ENCODE measurements at regions of chr1 and their contacts with region 1.

Region 1: DNA sequence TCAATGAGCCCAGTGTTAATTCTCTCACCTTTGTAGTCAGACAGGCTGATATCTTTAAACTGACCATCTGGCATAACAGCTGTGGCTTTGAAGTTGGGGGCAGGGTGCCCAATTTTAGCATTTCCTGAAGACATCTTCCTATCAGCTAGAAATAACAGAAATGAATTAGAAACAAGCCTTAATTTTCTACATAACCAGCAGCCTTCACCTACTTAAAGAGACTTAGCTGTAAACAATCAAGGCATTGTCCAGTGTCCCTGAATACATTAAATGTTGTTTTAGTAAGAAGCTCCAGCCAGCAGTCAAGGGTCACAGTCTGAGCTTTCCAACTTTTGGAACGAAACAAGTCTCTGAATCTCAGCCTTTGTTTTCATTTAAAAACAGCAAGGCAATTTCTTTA is 2.8 kb downstream of the PRDX1 start:
- DNase-seq: no peak
- ATAC-seq: no peak
- H3K4me3 ChIP-seq: no peak overlapping the region
- H3K27ac ChIP-seq: peak overlapping the region in 2 of 4 donors; percentile 12 to 39
- H3K4me1 ChIP-seq: peaks cover 0 to 13% (median 0%) of the 10 kb centered on the region in 3 donors
- H3K27me3 ChIP-seq: no peaks in the 10 kb centered on the region
- CTCF ChIP-seq: no peak

Region 2: GRCh38 chr1:44970317-44970716 is 548.6 kb before region 1 on chr1:
- intact Hi-C with region 1: no loop called
- DNase-seq: no peak
- ATAC-seq: no peak
- H3K4me3 ChIP-seq: no peak overlapping the region
- H3K27ac ChIP-seq: no peak overlapping the region
- H3K4me1 ChIP-seq: no peaks in the 10 kb centered on the region
- H3K27me3 ChIP-seq: no peaks in the 10 kb centered on the region
- CTCF ChIP-seq: no peak

Region 3: GRCh38 chr1:45348716-45349677 is 169.9 kb before region 1 on chr1:
- intact Hi-C with region 1: no loop called
- DNase-seq: peak in 2 of 6 donors; percentile 33 to 51
- ATAC-seq: peak; percentile 63 to 83 (median 80)
- H3K4me3 ChIP-seq: no peak overlapping the region
- H3K27ac ChIP-seq: no peak overlapping the region
- H3K4me1 ChIP-seq: peaks cover 0 to 6% (median 0%) of the 10 kb centered on the region in 3 donors
- H3K27me3 ChIP-seq: no peaks in the 10 kb centered on the region
- CTCF ChIP-seq: no peak

Region 4: DNA sequence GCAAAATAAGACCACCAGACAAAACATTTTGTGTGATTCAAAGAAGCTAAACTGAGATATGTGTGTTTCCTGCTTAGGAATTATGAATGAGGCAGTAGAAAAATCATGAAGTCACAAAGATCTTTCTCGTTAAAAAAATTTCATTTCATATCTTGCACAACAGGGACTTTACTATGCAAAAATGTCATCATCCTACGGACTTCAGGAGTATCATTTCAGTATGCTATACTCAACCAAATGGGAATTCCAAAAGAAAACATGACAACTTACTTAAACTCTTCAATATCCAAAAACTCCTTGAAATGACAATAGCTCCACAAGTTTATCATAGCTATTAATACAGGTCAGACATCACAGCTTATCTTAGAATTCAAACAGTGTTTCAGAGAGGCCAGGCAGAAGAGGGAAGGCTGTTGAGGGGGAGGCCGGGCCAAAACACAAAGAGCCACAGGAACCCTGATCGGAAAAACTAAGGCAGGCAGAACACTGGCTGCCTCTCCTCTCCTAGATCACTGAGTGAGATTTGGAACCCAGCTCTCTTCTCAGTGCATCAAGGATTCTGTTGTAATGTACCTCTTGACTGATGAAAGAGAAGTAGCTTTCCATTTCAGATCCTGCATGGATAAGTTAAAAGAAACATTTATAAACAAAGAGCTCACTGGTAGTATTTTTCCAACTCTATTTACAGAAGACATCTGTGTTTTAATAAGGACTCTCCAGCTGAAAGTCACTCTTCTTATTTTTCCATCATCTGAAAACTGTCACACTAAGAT is 94.8 kb before region 1 on chr1:
- intact Hi-C with region 1: no loop called
- DNase-seq: no peak
- ATAC-seq: no peak
- H3K4me3 ChIP-seq: no peak overlapping the region
- H3K27ac ChIP-seq: no peak overlapping the region
- H3K4me1 ChIP-seq: no peaks in the 10 kb centered on the region
- H3K27me3 ChIP-seq: no peaks in the 10 kb centered on the region
- CTCF ChIP-seq: no peak

Region 5: DNA sequence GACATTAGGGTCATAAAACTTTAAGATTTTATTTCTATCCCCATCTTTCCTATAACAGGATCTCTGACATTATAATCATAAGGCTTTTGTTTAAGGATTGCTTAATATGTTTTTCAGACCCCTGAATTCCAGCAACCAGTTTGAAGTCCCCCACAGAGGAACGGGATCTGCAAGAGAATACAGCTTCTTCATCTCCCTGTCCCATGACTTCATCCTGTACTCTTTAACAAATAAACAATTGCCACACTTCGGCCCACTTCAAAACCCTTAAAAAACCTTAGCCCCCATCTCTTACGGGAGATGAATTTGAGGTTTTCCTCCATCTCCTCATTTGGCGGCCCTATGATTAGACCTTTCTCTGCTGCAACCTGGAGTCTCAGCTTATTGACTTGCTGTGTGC is 63.7 kb before region 1 on chr1:
- intact Hi-C with region 1: no loop called
- DNase-seq: no peak
- ATAC-seq: no peak
- H3K4me3 ChIP-seq: no peak overlapping the region
- H3K27ac ChIP-seq: no peak overlapping the region
- H3K4me1 ChIP-seq: no peaks in the 10 kb centered on the region
- H3K27me3 ChIP-seq: no peaks in the 10 kb centered on the region
- CTCF ChIP-seq: no peak

Region 6: DNA sequence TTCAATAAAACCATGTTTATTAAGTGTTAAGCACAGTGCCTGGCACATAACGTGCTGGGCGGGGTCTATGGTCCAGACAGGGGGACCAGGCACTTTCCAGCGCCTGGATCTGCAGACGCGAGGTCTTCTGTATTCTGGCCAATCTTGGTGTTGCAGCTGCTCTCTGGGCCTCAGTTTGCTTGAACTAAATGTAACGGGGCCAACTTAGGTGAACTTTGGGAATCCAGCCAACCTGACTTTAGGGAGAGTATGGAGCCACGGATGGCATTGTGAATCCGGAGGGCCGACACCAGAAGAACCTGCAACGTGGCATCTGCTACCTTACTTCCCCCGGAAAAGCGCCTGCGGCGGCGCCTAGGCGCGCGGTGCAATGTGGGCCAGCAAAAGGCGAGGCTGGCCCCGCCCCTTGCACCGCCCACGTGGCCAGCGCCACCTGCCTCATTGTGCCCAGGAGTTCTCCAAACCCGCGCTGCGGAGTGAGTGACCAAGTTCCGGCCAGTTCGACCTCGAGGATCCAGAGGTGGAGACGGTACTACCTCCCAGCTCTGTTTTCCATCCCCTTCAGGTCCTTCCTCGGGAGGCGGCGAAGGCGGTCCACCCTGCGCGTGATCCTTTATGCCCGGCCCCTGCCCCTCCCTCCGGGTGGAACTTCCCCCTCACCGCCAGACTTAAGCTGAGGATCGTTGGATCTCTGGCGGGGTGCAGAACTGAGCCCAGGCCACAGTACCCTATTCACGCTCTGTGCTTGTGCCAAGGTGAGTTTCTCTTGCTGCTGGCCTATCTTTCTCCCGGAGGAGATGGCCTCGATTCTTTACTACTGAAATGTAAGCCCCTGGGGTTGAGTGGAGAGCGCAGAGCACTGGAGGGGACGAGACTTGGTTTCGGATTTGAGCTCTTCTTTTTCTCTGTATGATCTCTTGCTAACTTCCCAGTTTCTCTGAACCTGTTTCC is 31.8 kb after region 1 on chr1 and contains the start of gene AKR1A1:
- intact Hi-C with region 1: loop called in 1 of 3 experiments (anchors 5 kb)
- DNase-seq: peak; percentile 88 to 96 (median 92)
- ATAC-seq: peak; percentile 95 to 98 (median 96)
- H3K4me3 ChIP-seq: peak within 1 kb of the TSS; percentile 41 to 81 (median 64)
- H3K27ac ChIP-seq: peak within 1 kb of the TSS; percentile 77 to 92 (median 88)
- H3K4me1 ChIP-seq: peaks cover 3 to 16% (median 8%) of the 10 kb centered on the region in 3 donors
- H3K27me3 ChIP-seq: no peaks in the 10 kb centered on the region
- CTCF ChIP-seq: no peak
- total RNA-seq, gene AKR1A1: 77.6 to 127 (median 110) TPM

Region 7: DNA sequence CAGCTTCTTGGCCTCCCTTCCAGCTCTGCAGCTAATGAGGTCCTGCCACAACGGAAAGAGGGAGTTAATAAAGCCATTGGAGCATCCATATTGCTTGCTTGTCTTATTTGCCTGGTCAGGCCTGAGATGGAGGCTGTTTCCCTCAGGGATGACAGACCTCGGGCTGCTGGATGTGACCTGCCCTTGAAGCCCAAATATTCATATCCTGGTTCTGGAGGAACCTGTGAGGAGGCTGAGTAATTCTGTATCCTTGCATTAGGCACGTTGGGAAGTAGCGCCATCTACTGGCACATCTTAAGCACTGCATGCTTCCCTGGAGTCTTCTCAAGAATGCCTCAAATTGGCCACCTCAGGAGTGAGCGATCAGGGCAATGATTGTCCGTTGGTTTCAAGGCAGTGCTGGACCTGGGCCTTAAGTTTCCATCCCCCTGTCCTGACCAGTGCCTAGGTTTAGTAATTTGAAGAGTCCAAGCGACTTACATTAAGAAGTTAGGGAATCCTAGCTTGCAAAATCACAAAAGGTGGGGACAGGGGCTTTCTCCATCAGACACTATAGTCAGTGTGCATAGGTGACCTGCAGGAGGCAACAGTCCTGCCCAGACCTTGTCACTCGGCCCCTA is 51.2 kb after region 1 on chr1:
- intact Hi-C with region 1: loop called in 2 of 3 experiments (anchors 5 kb)
- DNase-seq: peak; percentile 39 to 78 (median 71)
- ATAC-seq: peak; percentile 86 to 99 (median 94)
- H3K4me3 ChIP-seq: no peak overlapping the region
- H3K27ac ChIP-seq: no peak overlapping the region
- H3K4me1 ChIP-seq: no peaks in the 10 kb centered on the region
- H3K27me3 ChIP-seq: no peaks in the 10 kb centered on the region
- CTCF ChIP-seq: peak; percentile 86 to 97 (median 94)

Measured in pancreas (tissue), 10 donors.